Posterior cingulate gyrus (tissue), 11 donors: ENCODE measurements at regions of chr17 and their contacts with region 1.

Region 1: DNA sequence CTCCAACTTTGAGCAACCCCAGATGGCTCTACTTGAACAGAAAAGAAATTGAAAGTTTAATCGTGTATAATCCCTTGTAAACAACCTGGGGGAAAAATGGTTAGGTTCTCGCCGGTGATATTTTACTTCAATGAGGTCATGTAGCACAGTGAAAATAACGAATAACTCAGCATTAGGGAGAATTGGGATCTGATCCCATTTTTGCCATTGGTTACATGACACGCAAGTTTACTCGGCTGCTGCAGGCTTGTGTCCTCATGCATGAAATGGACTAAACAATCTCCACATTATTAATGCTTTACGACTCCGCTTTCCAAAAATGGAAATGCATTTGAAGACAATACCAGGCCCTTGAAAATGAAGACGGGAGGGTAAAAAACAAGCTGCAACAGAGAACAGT is 45.5 kb upstream of the LRRC37A3 start:
- DNase-seq: no peak

Region 2: GRCh38 chr17:65085397-65085796 is 120.6 kb after region 1 on chr17:
- intact Hi-C with region 1: no loop called
- DNase-seq: no peak

Region 3: GRCh38 chr17:65198653-65199382 is 234.0 kb after region 1 on chr17:
- intact Hi-C with region 1: loop called (anchors 5 kb)
- DNase-seq: no peak